Lower leg skin (tissue), 4 donors: ENCODE measurements at regions of chr4 and their contacts with region 1.

Region 1: DNA sequence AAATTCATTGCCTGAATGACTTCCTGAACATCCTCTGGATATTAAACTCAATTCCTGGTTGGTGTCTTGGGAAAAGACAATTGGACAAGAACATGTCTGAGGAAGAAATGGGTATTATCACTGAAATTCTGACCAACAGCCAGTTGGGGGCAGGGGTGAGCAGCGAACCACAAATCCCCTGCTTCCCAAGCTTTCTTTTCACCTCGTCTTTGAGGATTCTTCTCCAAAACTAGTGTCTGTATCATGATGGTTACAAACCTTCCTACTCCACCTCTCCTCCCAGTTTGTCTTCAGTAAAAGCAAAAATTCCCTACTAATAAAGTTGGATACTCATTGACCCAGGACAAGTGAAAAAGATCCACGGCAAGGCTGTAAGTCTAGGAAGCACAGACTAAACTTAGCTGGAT is 48.3 kb upstream of the WDR1 start:
- DNase-seq: no peak
- H3K4me3 ChIP-seq: no peak overlapping the region
- CTCF ChIP-seq: no peak
- POLR2A ChIP-seq: no peak

Region 2: DNA sequence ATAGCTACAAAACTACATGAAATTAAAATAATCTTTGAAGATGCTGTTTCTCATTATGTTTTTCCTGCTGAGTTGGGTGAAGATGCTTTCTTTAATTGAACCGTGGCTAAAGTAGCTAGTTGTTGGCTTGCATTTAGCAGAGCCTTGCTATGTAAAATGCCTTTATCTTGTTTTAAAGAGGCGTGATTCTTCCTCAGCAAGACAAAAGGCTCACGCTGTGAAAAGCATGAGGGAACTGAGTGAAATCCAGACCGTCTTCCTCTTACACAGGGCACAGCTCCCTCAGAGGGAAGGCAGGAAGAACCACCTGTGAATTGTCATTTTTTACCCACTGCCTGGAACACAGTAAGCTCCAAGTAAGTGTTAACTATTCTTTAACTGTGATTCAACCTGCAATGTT is 331.3 kb after region 1 on chr4:
- intact Hi-C with region 1: no loop called
- DNase-seq: no peak
- H3K4me3 ChIP-seq: no peak overlapping the region
- CTCF ChIP-seq: no peak
- POLR2A ChIP-seq: no peak

Region 3: GRCh38 chr4:10554694-10555093 is 389.8 kb after region 1 on chr4:
- intact Hi-C with region 1: loop called (anchors 10 kb)
- DNase-seq: peak in 1 of 2 donors; percentile 58
- H3K4me3 ChIP-seq: no peak overlapping the region
- CTCF ChIP-seq: no peak
- POLR2A ChIP-seq: no peak